ENCODE measurements at regions of chr19 and their contacts with region 1.

Region 1: DNA sequence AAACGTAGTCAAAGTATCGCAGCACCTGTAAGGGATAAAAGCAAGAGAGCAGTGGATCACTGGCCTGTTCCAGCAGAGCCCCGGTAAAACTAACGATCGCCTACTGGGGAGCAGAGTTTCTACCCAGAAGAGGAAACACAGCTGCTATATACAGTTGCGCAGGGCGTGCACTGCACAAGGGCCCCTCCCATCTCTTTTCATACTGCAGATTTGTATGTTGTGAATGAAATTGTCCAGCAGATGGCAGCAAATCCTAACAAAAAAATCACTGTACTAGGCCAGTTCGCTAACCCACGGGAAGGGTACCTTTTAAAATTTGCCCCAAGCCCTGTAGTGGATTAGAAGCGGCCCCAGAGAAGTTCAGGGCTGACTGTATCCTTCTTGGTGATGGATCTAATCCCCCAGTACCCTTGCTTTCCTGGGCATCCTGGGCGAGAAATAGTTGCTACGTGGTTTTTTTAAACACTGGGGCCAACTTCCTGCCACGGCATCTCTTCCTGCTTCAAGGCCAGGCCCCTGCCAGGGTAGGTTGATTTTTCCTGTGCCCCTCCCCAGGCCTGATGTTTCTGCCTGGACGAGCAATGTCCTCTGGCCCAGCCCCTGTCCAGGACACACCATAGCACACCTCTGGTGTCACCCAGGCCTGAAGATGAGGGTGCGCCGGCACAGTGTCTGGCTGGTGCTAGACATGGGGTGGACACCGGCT is 127.0 kb downstream of the IER2 start:
- DNase-seq: peak; percentile 66
- ATAC-seq: peak; percentile 89
- H3K4me3 ChIP-seq: no peak overlapping the region
- H3K27ac ChIP-seq: no peak overlapping the region
- H3K4me1 ChIP-seq: no peaks in the 10 kb centered on the region
- H3K27me3 ChIP-seq: no peaks in the 10 kb centered on the region; a peak in 1 of 5 replicates
- CTCF ChIP-seq: peak; percentile 78
- EP300 ChIP-seq: no peak
- POLR2A ChIP-seq: no peak
- RAD21 ChIP-seq: peak; percentile 72

Region 2: GRCh38 chr19:13262450-13262849 is 14.8 kb before region 1 on chr19:
- CTCF ChIA-PET with region 1: no interaction called
- POLR2A ChIA-PET with region 1: no interaction called
- in situ Hi-C with region 1: no loop called
- intact Hi-C with region 1: no loop called
- DNase-seq: peak; percentile 38
- ATAC-seq: no peak; the same call in 2 of the 3 replicates
- H3K4me3 ChIP-seq: no peak overlapping the region
- H3K27ac ChIP-seq: no peak overlapping the region
- H3K4me1 ChIP-seq: no peaks in the 10 kb centered on the region
- H3K27me3 ChIP-seq: peaks cover 1 to 16% of the 10 kb centered on the region in 2 experiments; a peak in 2 of 5 replicates
- CTCF ChIP-seq: peak; percentile 69
- EP300 ChIP-seq: no peak
- POLR2A ChIP-seq: no peak
- RAD21 ChIP-seq: no peak

Region 3: DNA sequence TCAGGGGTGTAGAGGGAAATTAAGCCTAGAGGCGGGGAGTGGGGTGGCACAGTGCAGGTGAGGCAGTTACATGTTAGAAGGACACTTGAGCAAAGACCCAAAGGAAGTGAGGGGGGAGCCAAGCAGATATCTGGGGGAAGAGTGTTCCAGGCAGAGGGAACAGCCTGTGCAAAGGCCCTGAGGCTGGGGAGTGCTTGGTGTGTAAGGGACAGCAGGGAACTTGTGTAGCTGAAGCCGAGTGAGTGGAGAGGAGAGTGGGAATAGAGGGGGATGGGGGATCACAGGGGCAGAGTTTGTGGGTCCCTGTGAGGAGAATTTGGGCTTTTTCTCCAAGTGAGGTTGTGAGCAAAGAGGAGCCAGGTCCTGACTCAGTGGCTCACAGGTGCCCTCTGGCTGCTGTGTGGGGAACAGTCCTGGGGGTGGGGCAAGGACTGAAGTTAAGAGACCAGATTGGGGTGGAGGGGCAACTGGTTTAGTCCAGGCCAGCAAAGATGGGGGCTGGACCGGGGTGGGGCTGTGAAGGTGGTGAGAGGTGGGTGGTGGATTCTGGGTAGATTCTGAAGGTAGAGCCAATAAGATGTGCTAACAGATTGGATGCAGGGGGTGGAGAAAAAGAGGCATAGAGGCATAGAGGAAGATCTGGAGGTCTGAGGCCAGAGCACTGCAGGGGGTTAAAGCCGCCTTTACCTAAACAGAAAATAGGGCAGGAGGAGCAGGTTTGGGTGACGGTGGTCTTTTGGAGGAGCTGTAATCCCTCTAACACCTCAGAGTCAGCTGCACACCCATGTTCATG is 153.7 kb after region 1 on chr19:
- CTCF ChIA-PET with region 1: interaction called, 32 read pairs
- POLR2A ChIA-PET with region 1: no interaction called
- in situ Hi-C with region 1: loop called (anchors 5 kb)
- intact Hi-C with region 1: loop called (anchors 1 kb)
- DNase-seq: peak; percentile 33
- ATAC-seq: peak; percentile 62; the same call in 2 of the 3 replicates
- H3K4me3 ChIP-seq: no peak overlapping the region
- H3K27ac ChIP-seq: no peak overlapping the region
- H3K4me1 ChIP-seq: no peaks in the 10 kb centered on the region
- H3K27me3 ChIP-seq: no peaks in the 10 kb centered on the region
- CTCF ChIP-seq: peak; percentile 71
- EP300 ChIP-seq: no peak
- POLR2A ChIP-seq: no peak
- RAD21 ChIP-seq: peak; percentile 58; the same call in 1 of the 2 replicates

Region 4: GRCh38 chr19:13588957-13589833 is 311.9 kb after region 1 on chr19:
- CTCF ChIA-PET with region 1: interaction called, 41 read pairs
- POLR2A ChIA-PET with region 1: no interaction called
- in situ Hi-C with region 1: loop called (anchors 5 kb)
- intact Hi-C with region 1: no loop called
- DNase-seq: peak; percentile 22
- ATAC-seq: peak; percentile 93
- H3K4me3 ChIP-seq: no peak overlapping the region
- H3K27ac ChIP-seq: no peak overlapping the region
- H3K4me1 ChIP-seq: no peaks in the 10 kb centered on the region
- H3K27me3 ChIP-seq: no peaks in the 10 kb centered on the region
- CTCF ChIP-seq: peak; percentile 88
- EP300 ChIP-seq: no peak
- POLR2A ChIP-seq: no peak
- RAD21 ChIP-seq: peak; percentile 75

Region 5: DNA sequence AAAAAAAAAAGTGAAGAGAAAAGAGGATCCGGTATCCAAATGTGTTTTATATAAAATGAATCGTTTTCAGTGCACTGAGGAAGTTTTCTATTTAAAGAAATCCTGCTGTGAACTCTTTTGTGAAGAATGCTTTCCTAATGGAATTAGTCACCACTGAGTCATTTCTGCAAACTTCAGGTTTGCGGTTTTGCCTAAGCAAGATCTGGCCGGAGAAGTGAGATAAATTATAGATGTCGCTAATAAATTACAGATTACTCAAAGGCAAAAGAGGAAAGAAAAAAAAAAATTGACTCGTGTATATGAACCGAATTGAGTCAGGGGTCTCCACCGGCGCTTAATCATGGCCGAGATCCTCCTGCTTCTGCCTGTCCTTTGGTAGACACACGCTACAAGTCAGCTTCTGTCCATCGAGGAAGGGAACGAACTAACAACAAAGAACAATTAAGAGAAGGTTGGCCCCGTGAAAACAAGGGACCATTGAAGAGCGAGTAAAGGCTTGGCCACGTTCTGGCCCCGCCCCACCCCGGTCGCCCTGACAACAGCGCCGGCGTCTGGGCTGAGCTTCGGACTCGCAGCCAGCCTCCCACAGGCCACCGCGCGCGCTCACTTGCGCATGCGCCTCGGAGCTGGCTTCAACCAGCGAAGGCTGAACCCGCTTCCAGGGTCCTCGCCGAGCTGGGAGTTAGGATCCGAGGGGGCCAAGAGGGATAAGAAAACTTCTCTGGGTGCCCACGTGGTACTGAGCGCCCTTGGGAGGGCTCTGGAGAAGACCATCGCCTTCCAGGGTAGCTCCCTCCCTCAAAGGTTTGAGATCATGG is 454.1 kb after region 1 on chr19:
- CTCF ChIA-PET with region 1: no interaction called
- POLR2A ChIA-PET with region 1: no interaction called
- in situ Hi-C with region 1: loop called (anchors 10 kb)
- intact Hi-C with region 1: no loop called
- DNase-seq: peak; percentile 95
- ATAC-seq: peak; percentile 100
- H3K4me3 ChIP-seq: peak overlapping the region; percentile 70 to 83 (median 79)
- H3K27ac ChIP-seq: peak overlapping the region; percentile 78
- H3K4me1 ChIP-seq: peaks cover 33% of the 10 kb centered on the region
- H3K27me3 ChIP-seq: no peaks in the 10 kb centered on the region
- CTCF ChIP-seq: no peak
- EP300 ChIP-seq: no peak
- POLR2A ChIP-seq: peak; percentile 84 to 93
- RAD21 ChIP-seq: 0 out of 2 replicates have a peak, but pooled peaks have one; percentile 12